ENCODE measurements at regions of chr2 and their contacts with region 1.

Region 1: DNA sequence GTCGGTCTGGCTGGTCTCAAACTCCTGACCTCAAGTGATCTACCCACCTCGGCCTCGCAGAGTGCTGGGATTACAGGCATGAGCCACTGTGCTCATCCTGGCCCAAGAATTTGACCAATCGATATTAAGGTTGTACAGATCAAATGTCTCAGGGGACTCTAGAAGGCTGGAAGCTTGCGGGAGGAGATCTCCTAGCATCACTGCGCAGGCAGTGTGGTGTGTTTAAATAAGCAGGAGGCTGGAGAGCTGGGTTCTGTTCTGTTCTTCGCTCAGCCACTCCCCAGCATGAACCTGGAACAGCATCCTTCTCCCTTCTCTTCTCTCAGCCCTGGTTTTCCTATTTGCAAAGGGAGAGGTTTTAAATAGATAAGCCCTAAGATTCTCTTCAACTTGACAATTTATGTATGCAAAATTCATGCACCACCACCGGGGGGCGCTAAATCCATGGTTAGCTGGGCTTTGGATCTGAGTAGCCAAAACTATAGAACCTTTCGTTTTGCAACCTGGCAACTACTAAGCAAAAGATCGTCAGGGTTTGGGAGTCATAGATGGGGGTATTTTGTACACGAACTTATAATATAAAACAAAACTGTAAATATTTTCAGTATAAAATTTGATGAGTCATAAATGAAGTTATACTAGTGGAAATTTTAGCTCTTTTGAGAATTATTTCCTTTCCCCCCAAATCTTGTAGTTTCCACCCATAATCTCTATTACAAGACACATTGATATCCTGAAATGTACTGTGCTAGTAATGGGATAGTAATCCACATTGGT is 60.6 kb downstream of the SLC16A14 start:
- DNase-seq: peak; percentile 63
- CTCF ChIP-seq: peak; percentile 78

Region 2: DNA sequence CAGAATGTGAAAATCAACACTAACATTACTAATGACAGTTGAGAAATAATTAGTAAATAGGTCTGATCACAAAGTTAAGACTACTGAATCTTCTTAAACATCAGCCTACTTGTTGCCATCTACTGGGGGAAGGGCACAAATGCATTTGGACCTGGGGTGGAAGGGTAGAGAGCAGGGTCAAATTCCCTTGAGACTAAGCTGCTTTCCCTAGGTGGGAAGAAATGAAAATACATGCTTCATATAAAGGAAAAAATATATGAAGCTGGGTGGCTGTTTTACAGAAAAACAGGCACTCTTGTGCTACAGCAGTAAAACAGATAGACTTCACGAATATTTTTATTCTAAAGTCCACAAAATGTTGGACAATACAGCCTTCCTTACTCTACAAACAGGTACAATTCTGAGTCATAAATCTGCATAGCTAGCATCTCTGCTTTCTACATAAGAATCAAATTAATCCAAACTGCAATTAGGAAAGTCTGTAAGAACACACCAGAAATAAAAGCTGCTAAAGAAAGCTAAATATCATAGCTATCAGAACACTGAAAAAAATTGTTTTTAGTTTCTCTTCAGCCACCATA is 97.2 kb before region 1 on chr2:
- CTCF ChIA-PET with region 1: no interaction called
- POLR2A ChIA-PET with region 1: no interaction called
- DNase-seq: peak; percentile 45
- CTCF ChIP-seq: peak; percentile 58

Region 3: GRCh38 chr2:230018153-230018552 is 10.0 kb after region 1 on chr2:
- CTCF ChIA-PET with region 1: interaction called, 53 read pairs
- POLR2A ChIA-PET with region 1: no interaction called
- DNase-seq: no peak
- CTCF ChIP-seq: no peak

Region 4: GRCh38 chr2:230023309-230023708 is 15.2 kb after region 1 on chr2:
- CTCF ChIA-PET with region 1: interaction called, 53 read pairs
- POLR2A ChIA-PET with region 1: no interaction called
- DNase-seq: no peak
- CTCF ChIP-seq: no peak

Region 5: DNA sequence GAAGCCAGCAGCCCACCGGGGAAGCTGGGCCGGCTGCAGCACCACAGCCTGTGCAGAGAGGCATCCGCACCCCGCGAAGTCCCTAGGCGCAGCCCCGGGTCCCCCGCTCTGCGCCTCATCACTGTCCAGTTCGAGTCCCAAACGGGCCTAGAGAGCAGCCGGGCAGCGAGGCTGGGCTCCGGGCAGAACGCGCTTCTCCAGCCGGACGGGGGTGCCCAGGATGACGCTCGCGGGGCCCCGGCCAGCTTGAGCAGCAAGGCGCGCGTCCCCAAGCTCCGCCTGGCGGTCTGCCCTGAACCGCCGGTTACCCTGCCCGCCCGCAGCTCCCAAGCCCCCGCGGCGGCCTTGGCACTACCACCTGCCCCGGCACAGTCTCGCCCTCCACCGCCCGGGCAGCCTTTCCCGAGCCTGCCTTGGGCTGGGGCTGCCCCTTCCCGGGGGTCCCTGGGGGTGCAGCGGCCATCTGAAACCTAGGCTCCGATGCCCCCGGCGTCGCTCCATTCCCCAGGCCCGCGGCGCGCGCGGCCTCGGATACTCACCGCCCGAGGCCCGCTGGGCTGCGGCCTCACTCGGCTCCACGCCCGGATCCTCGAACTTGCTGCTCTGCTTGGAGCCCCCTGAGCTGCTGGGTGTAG is 60.0 kb after region 1 on chr2:
- CTCF ChIA-PET with region 1: interaction called, 24 read pairs
- POLR2A ChIA-PET with region 1: no interaction called
- DNase-seq: peak; percentile 53
- CTCF ChIP-seq: peak; percentile 29

Region 6: DNA sequence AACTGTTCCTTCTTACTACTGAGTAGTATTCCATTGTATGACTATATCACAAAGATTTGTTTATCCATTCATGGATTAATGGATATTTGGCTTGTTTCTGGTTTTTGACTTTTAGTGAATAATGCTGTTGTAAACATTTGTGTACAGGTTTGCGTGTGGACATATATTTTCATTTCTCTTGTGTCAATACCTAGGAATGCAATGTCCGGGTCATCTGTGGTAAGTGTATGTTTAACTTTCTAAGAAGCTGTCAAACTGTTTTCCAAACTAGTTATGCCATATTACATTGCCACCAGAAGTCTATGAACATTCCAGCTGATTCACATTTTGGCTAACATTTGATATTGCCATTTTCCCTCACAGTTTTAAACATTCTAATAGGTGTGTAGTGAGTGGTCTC is 89.7 kb after region 1 on chr2:
- CTCF ChIA-PET with region 1: no interaction called
- POLR2A ChIA-PET with region 1: no interaction called
- DNase-seq: no peak
- CTCF ChIP-seq: no peak

Region 7: GRCh38 chr2:230383453-230383852 is 375.3 kb after region 1 on chr2:
- CTCF ChIA-PET with region 1: no interaction called
- POLR2A ChIA-PET with region 1: no interaction called
- DNase-seq: no peak
- CTCF ChIP-seq: no peak

Region 8: GRCh38 chr2:230614913-230615332 is 606.8 kb after region 1 on chr2:
- CTCF ChIA-PET with region 1: interaction called, 10 read pairs
- POLR2A ChIA-PET with region 1: interaction called, 3 read pairs
- DNase-seq: peak; percentile 75
- CTCF ChIP-seq: no peak

Measured in GM10248 (cell line).